HCT116 (cell line): ENCODE measurements at regions of chr4 and their contacts with region 1.

Region 1: GRCh38 chr4:154807042-154807630 is 26.1 kb downstream of the RBM46 start:
- DNase-seq: peak; percentile 34
- ATAC-seq: peak; percentile 64
- H3K4me3 ChIP-seq: no peak overlapping the region; a peak in 1 of 4 replicates
- H3K27ac ChIP-seq: no peak overlapping the region
- H3K4me1 ChIP-seq: no peaks in the 10 kb centered on the region
- H3K27me3 ChIP-seq: no peaks in the 10 kb centered on the region
- CTCF ChIP-seq: peak; percentile 52 to 99 (median 87)
- POLR2A ChIP-seq: no peak
- RAD21 ChIP-seq: peak; percentile 86

Region 2: GRCh38 chr4:154686838-154687237 is 120.3 kb before region 1 on chr4:
- CTCF ChIA-PET with region 1: interaction called, 20 read pairs
- POLR2A ChIA-PET with region 1: no interaction called
- RAD21 ChIA-PET with region 1: no interaction called
- intact Hi-C with region 1: no loop called
- DNase-seq: no peak
- ATAC-seq: no peak
- H3K4me3 ChIP-seq: no peak overlapping the region
- H3K27ac ChIP-seq: no peak overlapping the region
- H3K4me1 ChIP-seq: no peaks in the 10 kb centered on the region
- H3K27me3 ChIP-seq: no peaks in the 10 kb centered on the region
- CTCF ChIP-seq: peak; percentile 7 to 46 (median 26); a peak in 3 of 6 replicates
- POLR2A ChIP-seq: no peak
- RAD21 ChIP-seq: peak; percentile 46

Region 3: GRCh38 chr4:154928640-154929257 is 121.6 kb after region 1 on chr4:
- CTCF ChIA-PET with region 1: interaction called, 62 read pairs
- POLR2A ChIA-PET with region 1: no interaction called
- RAD21 ChIA-PET with region 1: interaction called in 1 of 2 experiments, 8 read pairs
- intact Hi-C with region 1: loop called (anchors 1 kb)
- DNase-seq: peak; percentile 43
- ATAC-seq: peak; percentile 81
- H3K4me3 ChIP-seq: no peak overlapping the region
- H3K27ac ChIP-seq: no peak overlapping the region
- H3K4me1 ChIP-seq: no peaks in the 10 kb centered on the region
- H3K27me3 ChIP-seq: no peaks in the 10 kb centered on the region
- CTCF ChIP-seq: peak; percentile 55 to 93 (median 63)
- POLR2A ChIP-seq: no peak
- RAD21 ChIP-seq: peak; percentile 85

Region 4: GRCh38 chr4:155353923-155354540 is 546.9 kb after region 1 on chr4:
- CTCF ChIA-PET with region 1: interaction called, 8 read pairs
- POLR2A ChIA-PET with region 1: no interaction called
- RAD21 ChIA-PET with region 1: no interaction called
- intact Hi-C with region 1: loop called (anchors 1 kb)
- DNase-seq: peak; percentile 51
- ATAC-seq: peak; percentile 100
- H3K4me3 ChIP-seq: no peak overlapping the region
- H3K27ac ChIP-seq: no peak overlapping the region
- H3K4me1 ChIP-seq: no peaks in the 10 kb centered on the region
- H3K27me3 ChIP-seq: no peaks in the 10 kb centered on the region
- CTCF ChIP-seq: peak; percentile 77 to 85 (median 81)
- POLR2A ChIP-seq: no peak
- RAD21 ChIP-seq: peak; percentile 81

Region 5: GRCh38 chr4:155371432-155372043 is 564.4 kb after region 1 on chr4:
- CTCF ChIA-PET with region 1: interaction called, 15 read pairs
- POLR2A ChIA-PET with region 1: no interaction called
- RAD21 ChIA-PET with region 1: no interaction called
- intact Hi-C with region 1: loop called (anchors 1 kb)
- DNase-seq: peak; percentile 16
- ATAC-seq: peak; percentile 70; the same call in 1 of the 2 replicates
- H3K4me3 ChIP-seq: no peak overlapping the region
- H3K27ac ChIP-seq: no peak overlapping the region
- H3K4me1 ChIP-seq: no peaks in the 10 kb centered on the region
- H3K27me3 ChIP-seq: no peaks in the 10 kb centered on the region
- CTCF ChIP-seq: peak; percentile 17 to 58 (median 57); a peak in 3 of 6 replicates
- POLR2A ChIP-seq: no peak
- RAD21 ChIP-seq: peak; percentile 54

Region 6: DNA sequence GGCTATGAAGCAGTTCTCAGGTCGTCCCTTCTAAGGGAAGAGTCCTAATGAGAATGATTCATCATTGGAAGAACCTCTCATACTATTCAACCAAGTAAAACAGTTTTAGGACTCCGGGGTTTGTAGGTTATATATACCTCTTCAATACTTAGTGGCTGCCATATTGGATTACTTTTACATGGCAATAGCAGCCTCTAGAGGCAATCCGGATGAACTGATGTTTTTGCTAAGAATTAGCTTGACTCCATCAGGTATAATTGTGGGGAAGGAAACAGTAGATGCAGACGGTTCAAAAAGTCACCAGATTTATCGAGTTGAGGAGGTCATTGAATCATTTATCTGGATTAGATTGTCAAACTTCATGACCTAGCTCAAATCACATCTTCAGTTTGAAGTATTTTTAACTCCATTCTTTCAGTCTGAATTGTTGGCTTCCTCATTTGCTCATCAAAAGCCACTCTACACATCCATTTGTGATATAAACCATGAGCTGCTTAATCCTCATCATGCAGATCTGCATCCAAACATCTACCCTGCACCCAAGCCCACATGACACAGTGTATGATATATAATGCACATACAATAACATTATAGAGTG is 980.1 kb after region 1 on chr4:
- CTCF ChIA-PET with region 1: interaction called, 9 read pairs
- POLR2A ChIA-PET with region 1: no interaction called
- RAD21 ChIA-PET with region 1: no interaction called
- intact Hi-C with region 1: loop called (anchors 5 kb)
- DNase-seq: peak; percentile 44
- ATAC-seq: peak; percentile 98
- H3K4me3 ChIP-seq: no peak overlapping the region
- H3K27ac ChIP-seq: no peak overlapping the region
- H3K4me1 ChIP-seq: no peaks in the 10 kb centered on the region
- H3K27me3 ChIP-seq: no peaks in the 10 kb centered on the region
- CTCF ChIP-seq: peak; percentile 72 to 81 (median 74)
- POLR2A ChIP-seq: no peak
- RAD21 ChIP-seq: peak; percentile 86